Psoas muscle (tissue), 8 donors: ENCODE measurements at regions of chr11 and their contacts with region 1.

Region 1: GRCh38 chr11:120108154-120108865 is 29.6 kb downstream of the TRIM29 start:
- DNase-seq: peak; percentile 65 to 80
- ATAC-seq: peak; percentile 86 to 92 (median 88)
- H3K4me3 ChIP-seq: no peak overlapping the region
- H3K27ac ChIP-seq: no peak overlapping the region
- H3K4me1 ChIP-seq: no peaks in the 10 kb centered on the region
- H3K27me3 ChIP-seq: peaks cover 0 to 5% (median 2%) of the 10 kb centered on the region in 3 donors
- CTCF ChIP-seq: peak; percentile 99

Region 2: GRCh38 chr11:119481021-119481666 is 627.2 kb before region 1 on chr11:
- intact Hi-C with region 1: loop called (anchors 2 to 5 kb)
- DNase-seq: peak; percentile 86 to 88
- ATAC-seq: peak; percentile 78 to 92 (median 88)
- H3K4me3 ChIP-seq: no peak overlapping the region
- H3K27ac ChIP-seq: no peak overlapping the region
- H3K4me1 ChIP-seq: no peaks in the 10 kb centered on the region
- H3K27me3 ChIP-seq: peaks cover 0 to 16% (median 2%) of the 10 kb centered on the region in 3 donors
- CTCF ChIP-seq: peak; percentile 96

Region 3: GRCh38 chr11:119666463-119667131 is 441.7 kb before region 1 on chr11:
- intact Hi-C with region 1: loop called (anchors 1 to 2 kb)
- DNase-seq: peak; percentile 76 to 88
- ATAC-seq: peak; percentile 95 to 98 (median 96)
- H3K4me3 ChIP-seq: no peak overlapping the region
- H3K27ac ChIP-seq: no peak overlapping the region
- H3K4me1 ChIP-seq: peaks cover 5% of the 10 kb centered on the region
- H3K27me3 ChIP-seq: no peaks in the 10 kb centered on the region
- CTCF ChIP-seq: peak; percentile 96

Region 4: DNA sequence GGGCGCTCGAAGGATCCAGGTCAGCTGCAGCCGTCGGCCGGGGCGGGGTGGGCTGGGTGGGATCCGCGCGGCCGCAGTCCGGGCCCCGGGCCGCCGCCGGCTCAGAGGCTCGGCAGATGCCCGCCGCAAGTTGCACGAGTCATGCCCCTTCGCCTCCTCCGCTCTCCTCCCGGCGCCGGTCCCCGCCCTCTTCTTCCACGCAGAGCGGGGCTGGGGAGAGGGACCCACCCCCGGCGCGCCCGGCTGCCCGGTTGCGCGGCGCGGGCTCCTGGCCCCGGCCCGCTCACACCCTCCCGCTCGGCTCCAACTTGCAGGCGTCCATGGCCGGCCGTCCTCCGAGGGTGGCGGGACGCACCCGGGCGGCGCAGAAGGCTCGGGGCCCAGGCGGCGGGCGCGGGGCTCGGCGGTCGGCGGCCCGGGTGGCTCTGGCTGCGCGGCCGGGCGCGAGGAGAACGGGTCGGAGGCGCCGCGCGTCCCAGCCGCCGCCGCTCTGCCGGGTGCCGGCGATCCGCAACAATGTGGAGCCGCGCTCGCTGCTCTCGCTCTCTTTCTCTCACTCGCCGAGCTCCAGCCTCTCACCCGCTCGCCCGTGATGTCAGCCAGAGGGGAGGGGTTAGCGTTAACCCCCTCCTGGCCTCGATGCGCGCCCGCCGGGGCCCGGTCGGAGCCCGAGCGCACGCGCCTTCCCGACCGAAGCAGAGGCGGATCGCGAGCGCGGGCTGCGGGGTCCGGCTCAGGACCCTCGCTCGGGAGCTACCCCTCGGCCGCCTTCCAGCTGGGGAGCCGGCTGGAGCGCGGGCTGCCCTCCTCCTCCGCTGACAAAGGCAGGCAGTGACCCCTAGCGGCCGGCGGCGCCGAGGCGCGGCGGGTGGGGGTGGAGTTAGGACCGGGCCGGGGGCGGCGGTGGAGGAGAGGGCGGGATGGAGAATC is 379.4 kb before region 1 on chr11 and contains the start of gene NECTIN1:
- intact Hi-C with region 1: loop called in 1 of 2 experiments (anchors 5 kb)
- DNase-seq: peak; percentile 89 to 91
- ATAC-seq: peak; percentile 92 to 96 (median 94)
- H3K4me3 ChIP-seq: peak within 1 kb of the TSS; percentile 86
- H3K27ac ChIP-seq: peak within 1 kb of the TSS; percentile 63
- H3K4me1 ChIP-seq: peaks cover 13% of the 10 kb centered on the region
- H3K27me3 ChIP-seq: peaks cover 0 to 29% (median 4%) of the 10 kb centered on the region in 3 donors
- CTCF ChIP-seq: peak; percentile 92
- total RNA-seq, gene NECTIN1: 1.6 to 2.2 (median 1.8) TPM

Region 5: DNA sequence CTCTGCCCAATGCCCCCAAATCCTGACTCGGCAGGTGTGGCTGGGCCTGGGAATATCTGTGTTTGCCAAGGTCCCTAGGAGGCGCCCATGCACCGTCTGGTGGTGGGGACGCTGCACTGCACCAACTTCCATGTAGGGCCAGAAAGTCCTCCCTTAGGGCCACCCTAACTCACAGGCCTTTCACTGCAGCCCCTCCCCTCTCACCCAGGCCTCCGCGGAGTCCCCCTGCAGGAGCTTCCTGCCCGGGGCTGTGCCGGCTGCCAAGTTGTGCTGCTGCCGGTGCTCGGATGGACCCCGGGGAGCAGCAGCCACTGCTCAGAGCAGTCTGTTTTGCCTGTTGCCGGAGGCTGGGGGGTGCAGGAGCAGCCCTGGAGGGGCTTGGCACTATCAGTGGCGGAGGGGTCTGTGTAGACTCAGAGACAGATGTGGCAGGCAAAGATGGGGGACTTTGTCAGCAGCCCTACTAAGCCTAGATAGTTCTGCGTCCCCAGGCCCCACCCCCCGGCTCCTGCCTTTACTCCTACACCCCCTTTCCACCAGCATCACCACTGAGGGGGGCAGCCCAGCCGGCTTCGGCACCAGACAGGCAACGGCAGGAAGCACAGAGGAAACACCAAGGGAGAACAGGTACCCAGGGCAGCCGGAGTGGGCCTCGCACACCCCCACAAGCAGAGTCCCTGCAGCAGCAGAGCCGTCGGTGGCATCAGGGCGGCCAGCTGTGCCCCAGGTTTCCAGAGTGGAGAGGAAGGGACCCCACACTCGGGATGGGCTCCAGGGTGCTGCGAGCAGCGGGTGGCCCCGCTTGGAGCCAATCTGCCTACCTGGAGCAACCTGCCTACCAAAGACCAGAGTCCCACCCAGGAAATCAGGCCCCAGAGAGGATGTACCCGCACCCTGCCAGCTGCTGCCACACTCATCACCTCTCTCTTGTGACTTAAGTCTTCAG is 94.7 kb before region 1 on chr11:
- intact Hi-C with region 1: loop called in 1 of 2 experiments (anchors 5 kb)
- DNase-seq: peak in 1 of 2 donors; percentile 32
- ATAC-seq: peak; percentile 58 to 72 (median 69)
- H3K4me3 ChIP-seq: no peak overlapping the region
- H3K27ac ChIP-seq: no peak overlapping the region
- H3K4me1 ChIP-seq: no peaks in the 10 kb centered on the region
- H3K27me3 ChIP-seq: peaks cover 0 to 67% (median 2%) of the 10 kb centered on the region in 3 donors
- CTCF ChIP-seq: peak; percentile 60